ENCODE measurements at regions of chr2 and their contacts with region 1.

Region 1: DNA sequence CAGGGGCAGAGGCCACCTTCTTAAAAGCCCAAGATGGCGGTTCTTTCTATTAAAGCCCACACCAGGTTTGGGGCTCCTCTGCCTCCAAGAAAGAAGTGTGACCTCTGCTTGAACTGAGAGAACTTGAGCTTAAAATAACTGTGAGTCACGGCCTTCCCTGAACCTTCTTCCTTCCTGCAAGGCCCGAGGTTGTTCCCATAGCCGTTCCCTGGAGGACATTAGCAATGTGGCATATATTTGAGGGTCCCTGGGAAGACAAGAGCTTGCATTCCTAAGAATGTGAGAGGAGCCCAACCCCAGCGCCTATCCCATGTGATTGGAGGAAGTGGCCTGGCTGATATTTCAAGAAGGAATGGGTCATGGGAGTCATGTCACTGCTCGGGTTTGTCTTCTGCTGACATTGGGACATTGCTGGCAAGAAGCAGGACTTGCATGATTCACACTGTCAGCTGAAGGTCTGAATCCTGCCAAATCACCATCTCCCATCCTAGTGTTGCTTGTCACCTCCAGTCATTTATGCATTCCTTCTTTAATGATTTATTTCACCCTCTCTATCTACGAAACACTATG is 168.1 kb downstream of the TRIB2 start:
- DNase-seq: peak; percentile 62 to 63
- ATAC-seq: peak; percentile 91 to 99 (median 96)
- H3K4me3 ChIP-seq: no peak overlapping the region
- H3K27ac ChIP-seq: peak overlapping the region; percentile 58
- H3K4me1 ChIP-seq: peaks cover 18% of the 10 kb centered on the region
- H3K27me3 ChIP-seq: no peaks in the 10 kb centered on the region
- CTCF ChIP-seq: no peak

Region 2: DNA sequence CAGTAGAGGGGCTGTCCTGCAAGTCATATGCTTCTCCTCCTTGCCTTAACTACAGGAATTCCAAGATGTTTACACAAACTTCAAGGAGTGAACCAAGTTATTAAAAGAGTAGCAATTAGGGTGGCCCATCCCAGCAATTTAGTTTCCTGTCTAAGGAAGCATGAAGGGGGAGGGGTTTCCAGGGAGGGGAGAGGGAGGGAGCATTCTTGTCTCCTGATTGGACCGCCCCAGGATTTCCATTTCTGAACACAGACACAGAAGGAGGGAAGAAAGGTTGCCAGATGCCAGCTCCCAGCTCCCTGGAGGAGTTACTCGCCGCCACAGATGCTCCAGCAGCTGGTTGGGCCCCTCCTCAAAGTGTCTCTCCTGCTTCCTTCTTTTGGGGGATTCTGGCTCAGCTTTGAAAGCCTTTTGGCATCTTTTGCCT is 60.4 kb before region 1 on chr2:
- intact Hi-C with region 1: loop called in 1 of 2 experiments (anchors 5 kb)
- DNase-seq: peak in 1 of 2 donors; percentile 52
- ATAC-seq: peak in 3 of 4 donors; percentile 34 to 57 (median 41)
- H3K4me3 ChIP-seq: no peak overlapping the region
- H3K27ac ChIP-seq: peak overlapping the region; percentile 78
- H3K4me1 ChIP-seq: peaks cover 13% of the 10 kb centered on the region
- H3K27me3 ChIP-seq: no peaks in the 10 kb centered on the region
- CTCF ChIP-seq: no peak

Region 3: DNA sequence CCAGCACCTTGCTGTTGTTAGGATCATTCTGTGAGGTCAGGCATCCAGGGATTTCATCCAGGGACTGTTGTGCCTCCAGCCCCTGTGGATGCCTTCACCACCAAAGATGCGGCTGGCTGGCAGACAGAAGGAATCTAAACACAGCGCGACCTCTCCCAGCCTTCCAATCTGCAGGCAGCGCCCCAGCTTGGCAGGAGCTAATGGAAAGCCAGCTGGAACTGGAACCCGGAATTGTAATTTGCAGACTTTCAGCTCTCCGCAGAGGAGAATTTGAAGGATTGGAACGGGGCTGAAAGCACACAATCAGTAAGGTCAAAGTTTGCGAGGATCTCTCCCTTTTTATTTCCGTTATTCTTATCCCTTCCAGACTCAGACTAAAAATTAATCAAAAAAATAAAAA is 40.3 kb before region 1 on chr2:
- intact Hi-C with region 1: no loop called
- DNase-seq: no peak
- ATAC-seq: no peak
- H3K4me3 ChIP-seq: no peak overlapping the region
- H3K27ac ChIP-seq: no peak overlapping the region
- H3K4me1 ChIP-seq: no peaks in the 10 kb centered on the region
- H3K27me3 ChIP-seq: peaks cover 0 to 5% (median 0%) of the 10 kb centered on the region in 3 donors
- CTCF ChIP-seq: no peak

Region 4: DNA sequence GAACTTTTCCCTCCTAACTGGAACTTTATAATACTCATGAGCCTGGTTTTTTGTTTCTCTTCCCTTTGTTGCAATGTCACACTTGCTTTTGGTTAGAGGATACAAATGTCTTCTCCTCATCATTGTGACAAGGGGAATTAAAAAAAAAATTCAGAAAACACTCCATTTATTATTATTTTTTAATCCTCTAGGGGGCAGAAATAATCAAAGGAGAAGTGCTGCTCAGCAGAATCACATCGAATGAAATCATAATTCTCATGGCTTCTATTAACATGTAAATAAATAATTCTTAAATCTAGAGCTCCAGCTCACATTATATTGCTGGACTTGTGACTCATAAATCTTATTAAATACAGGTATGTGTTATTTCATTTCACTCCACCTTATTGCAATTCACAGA is 105.7 kb after region 1 on chr2:
- intact Hi-C with region 1: no loop called
- DNase-seq: no peak
- ATAC-seq: no peak
- H3K4me3 ChIP-seq: no peak overlapping the region
- H3K27ac ChIP-seq: no peak overlapping the region
- H3K4me1 ChIP-seq: no peaks in the 10 kb centered on the region
- H3K27me3 ChIP-seq: no peaks in the 10 kb centered on the region
- CTCF ChIP-seq: peak; percentile 13

Measured in psoas muscle (tissue), 8 donors.